Cardiac septum (tissue), 1 donor: ENCODE measurements at regions of chr10 and their contacts with region 1.

Region 1: DNA sequence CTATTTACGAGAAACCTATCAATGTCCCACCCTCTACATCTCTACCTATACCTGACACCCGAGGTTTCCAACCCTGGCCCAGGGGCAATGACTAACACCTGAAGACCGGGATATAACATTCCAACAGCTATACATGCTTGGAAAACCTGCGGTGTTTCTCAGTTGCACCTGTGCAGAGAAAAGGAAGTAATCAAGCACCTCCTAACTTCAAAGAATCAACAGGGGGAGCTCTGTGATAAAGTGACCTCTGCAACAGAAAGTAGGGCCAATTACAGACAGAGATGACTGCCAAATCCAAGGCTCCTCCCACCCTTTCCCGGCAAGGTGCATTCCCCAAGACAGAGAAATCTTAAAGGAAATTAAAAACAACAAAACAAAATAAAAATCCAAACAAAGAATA is 41.3 kb downstream of the CCDC6 start:
- DNase-seq: no peak

Region 2: DNA sequence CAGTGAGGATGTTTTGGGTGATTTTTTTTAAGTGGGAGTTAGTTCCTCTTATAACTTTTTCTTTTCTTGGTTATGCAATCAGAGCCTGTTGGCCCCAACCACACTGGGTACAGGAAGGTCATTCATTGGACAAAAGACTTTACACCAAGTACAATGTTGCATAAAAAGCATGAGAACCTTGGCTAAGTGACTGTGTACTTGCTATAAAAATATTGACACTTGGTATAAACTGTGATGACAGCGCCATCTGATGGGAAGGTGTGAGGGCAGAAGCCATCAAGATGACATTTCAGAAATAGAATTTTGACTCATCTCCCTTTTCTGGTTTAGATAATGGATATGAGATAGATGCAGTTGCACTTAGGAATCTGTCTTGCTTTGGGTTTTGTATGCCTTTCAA is 167.6 kb after region 1 on chr10:
- intact Hi-C with region 1: loop called (anchors 10 kb)
- DNase-seq: no peak